ENCODE measurements at regions of chr2 and their contacts with region 1.

Region 1: GRCh38 chr2:64767670-64768468 is 114.2 kb upstream of the SERTAD2 start:
- DNase-seq: peak; percentile 82
- H3K4me3 Mint-ChIP-seq: peak overlapping the region; percentile 74
- H3K27ac Mint-ChIP-seq: peak overlapping the region; percentile 87
- H3K4me1 Mint-ChIP-seq: peaks cover 31% of the 10 kb centered on the region
- H3K27me3 Mint-ChIP-seq: no peaks in the 10 kb centered on the region
- CTCF ChIP-seq: no peak

Region 2: DNA sequence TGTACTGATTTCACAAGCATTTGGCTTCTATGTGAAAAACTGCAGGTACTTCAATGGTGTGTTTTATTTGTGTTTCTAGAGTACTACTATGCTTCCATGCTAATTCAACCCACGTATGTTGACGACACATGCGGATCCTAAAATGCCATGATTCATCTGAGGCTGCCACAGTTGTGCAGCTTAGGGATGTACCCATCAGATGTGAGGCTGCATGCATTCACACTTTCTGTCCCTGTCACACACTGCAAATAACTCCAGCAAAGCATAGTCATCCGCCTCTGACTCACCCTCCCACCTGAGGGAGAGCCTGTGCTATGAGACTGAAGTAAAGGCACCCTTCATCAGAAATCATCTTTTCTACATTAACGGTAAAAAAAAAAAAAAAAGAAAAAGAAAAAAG is 92.0 kb before region 1 on chr2:
- CTCF ChIA-PET with region 1: no interaction called
- POLR2A ChIA-PET with region 1: no interaction called
- intact Hi-C with region 1: no loop called
- DNase-seq: peak; percentile 56
- H3K4me3 Mint-ChIP-seq: no peak overlapping the region
- H3K27ac Mint-ChIP-seq: no peak overlapping the region
- H3K4me1 Mint-ChIP-seq: peaks cover 5% of the 10 kb centered on the region
- H3K27me3 Mint-ChIP-seq: no peaks in the 10 kb centered on the region
- CTCF ChIP-seq: no peak

Region 3: GRCh38 chr2:64708821-64709220 is 59.0 kb before region 1 on chr2:
- CTCF ChIA-PET with region 1: no interaction called
- POLR2A ChIA-PET with region 1: no interaction called
- intact Hi-C with region 1: no loop called
- DNase-seq: no peak
- H3K4me3 Mint-ChIP-seq: no peak overlapping the region
- H3K27ac Mint-ChIP-seq: no peak overlapping the region
- H3K4me1 Mint-ChIP-seq: no peaks in the 10 kb centered on the region
- H3K27me3 Mint-ChIP-seq: no peaks in the 10 kb centered on the region
- CTCF ChIP-seq: no peak

Region 4: GRCh38 chr2:64831134-64831976 is 63.5 kb after region 1 on chr2:
- CTCF ChIA-PET with region 1: no interaction called
- POLR2A ChIA-PET with region 1: interaction called, 4 read pairs
- intact Hi-C with region 1: loop called (anchors 1 kb)
- DNase-seq: peak; percentile 98
- H3K4me3 Mint-ChIP-seq: peak overlapping the region; percentile 23
- H3K27ac Mint-ChIP-seq: peak overlapping the region; percentile 91
- H3K4me1 Mint-ChIP-seq: peaks cover 30% of the 10 kb centered on the region
- H3K27me3 Mint-ChIP-seq: no peaks in the 10 kb centered on the region
- CTCF ChIP-seq: peak; percentile 85

Region 5: DNA sequence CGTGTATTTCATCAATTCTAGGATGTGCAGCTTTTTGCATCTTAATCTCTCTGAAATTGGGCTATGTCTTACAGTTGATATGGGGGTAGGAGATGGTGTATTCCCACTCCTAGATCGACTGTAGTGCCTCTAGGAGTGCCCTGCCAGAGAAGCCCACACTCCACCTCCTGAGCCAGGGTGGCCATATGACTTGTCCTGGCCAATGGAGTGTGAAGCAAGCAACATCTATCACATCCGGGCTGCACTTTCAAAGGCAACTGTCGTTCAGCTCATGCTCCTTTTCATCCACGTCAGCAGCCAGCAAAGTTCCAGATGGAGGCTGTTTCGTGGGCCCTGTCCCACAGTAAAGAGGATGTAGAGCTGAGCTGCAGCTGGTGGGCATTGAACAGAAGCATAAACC is 72.0 kb after region 1 on chr2:
- CTCF ChIA-PET with region 1: interaction called, 3 read pairs
- POLR2A ChIA-PET with region 1: interaction called, 13 read pairs
- intact Hi-C with region 1: no loop called
- DNase-seq: no peak
- H3K4me3 Mint-ChIP-seq: no peak overlapping the region
- H3K27ac Mint-ChIP-seq: no peak overlapping the region
- H3K4me1 Mint-ChIP-seq: peaks cover 41% of the 10 kb centered on the region
- H3K27me3 Mint-ChIP-seq: no peaks in the 10 kb centered on the region
- CTCF ChIP-seq: no peak

Region 6: DNA sequence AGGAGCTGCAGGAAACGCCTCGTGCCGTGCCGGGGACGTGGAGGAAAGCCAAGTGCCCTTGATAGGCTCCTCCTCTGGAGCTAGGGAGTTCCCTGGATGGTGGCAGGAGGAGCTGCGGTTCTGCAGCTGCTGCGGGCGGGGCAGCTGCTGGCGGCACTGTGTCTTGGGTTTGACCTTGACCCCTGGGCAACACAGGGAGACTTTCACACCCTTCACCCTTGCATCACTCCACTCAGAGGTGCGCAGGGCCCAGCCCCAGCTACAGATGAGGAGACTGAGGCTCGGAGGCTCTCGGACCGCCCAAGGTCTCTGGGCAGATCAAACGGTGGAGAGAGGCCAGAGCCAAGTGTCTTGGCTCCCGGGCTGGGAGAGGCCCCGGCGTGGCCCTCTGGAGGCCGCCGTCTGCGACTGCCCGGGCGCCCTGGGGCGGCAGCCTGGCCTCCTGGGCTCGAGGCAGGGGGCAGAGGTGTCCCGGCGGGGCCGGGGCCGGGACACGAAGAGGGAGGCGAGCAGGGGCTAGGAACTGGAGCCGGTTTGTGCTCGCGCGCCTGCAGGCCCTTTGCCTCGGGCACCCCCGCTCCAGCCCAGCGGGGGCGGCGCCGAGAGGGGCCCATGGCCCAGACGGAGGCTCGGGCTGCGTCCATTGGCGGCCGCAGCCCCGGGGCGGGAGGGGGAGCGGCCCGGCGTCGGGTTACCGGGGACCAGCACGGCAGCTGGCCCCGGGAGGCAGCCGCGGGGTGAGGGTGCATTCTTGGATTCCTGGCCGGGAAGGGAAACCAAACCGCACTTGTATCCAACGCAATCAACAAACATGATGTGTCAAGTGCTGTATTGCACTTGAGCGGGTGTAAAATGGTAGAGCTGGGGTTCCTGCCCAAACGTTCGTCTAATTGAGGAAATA is 91.7 kb after region 1 on chr2:
- CTCF ChIA-PET with region 1: interaction called, 3 read pairs
- POLR2A ChIA-PET with region 1: interaction called, 13 read pairs
- intact Hi-C with region 1: no loop called
- DNase-seq: peak; percentile 96
- H3K4me3 Mint-ChIP-seq: no peak overlapping the region
- H3K27ac Mint-ChIP-seq: no peak overlapping the region
- H3K4me1 Mint-ChIP-seq: peaks cover 11% of the 10 kb centered on the region
- H3K27me3 Mint-ChIP-seq: no peaks in the 10 kb centered on the region
- CTCF ChIP-seq: peak; percentile 15

Region 7: DNA sequence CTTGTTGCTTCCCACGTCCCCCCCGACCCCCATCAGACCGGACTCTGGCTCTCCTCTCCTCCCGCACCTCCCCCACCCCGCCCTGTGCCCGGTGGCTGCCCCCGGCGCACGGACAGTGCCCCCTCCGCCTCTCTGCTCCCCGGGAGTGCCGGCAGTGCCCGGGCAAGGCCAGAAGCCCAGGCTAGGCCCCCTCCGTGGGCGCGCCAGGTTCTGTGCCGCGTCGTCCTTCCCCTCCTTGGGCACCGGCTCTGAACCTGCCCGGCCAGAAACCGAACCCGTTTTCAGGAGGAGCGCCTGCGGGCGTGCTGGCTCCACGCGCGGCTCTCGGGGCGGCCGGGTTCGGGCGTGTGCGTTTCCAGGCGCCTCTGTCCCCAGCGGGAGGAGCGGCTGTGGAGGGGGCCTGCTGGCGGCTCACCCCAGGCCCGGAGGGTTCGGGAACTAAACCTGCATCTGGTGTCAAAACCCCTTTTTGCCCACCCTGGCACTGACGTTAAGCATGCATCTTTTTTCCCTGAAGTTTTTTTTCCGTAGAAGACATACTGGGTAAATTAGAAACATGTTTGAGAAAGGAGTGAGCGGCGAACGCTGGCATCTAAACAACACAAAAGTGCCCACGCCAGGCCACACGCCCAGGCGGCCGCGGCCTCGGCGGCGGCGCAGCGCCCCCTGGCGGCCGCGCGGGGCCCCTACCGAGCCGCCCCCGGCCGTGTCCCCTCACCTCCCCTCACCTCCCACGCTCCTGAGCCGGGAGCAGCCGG is 97.4 kb after region 1 on chr2:
- CTCF ChIA-PET with region 1: interaction called, 3 read pairs
- POLR2A ChIA-PET with region 1: interaction called, 13 read pairs
- intact Hi-C with region 1: loop called (anchors 1 kb)
- DNase-seq: peak; percentile 68
- H3K4me3 Mint-ChIP-seq: peak overlapping the region; percentile 64
- H3K27ac Mint-ChIP-seq: no peak overlapping the region
- H3K4me1 Mint-ChIP-seq: peaks cover 7% of the 10 kb centered on the region
- H3K27me3 Mint-ChIP-seq: no peaks in the 10 kb centered on the region
- CTCF ChIP-seq: peak; percentile 86

Measured in MCF 10A (cell line).